Activated CD8-positive, alpha-beta memory T cell treated with anti-CD3 and anti-CD28 coated beads, Interleukin-2, amount 10 ng/mL, durations not matched to agents 7 days and 5 days (primary cell): ENCODE measurements at regions of chr3 and their contacts with region 1.

Region 1: DNA sequence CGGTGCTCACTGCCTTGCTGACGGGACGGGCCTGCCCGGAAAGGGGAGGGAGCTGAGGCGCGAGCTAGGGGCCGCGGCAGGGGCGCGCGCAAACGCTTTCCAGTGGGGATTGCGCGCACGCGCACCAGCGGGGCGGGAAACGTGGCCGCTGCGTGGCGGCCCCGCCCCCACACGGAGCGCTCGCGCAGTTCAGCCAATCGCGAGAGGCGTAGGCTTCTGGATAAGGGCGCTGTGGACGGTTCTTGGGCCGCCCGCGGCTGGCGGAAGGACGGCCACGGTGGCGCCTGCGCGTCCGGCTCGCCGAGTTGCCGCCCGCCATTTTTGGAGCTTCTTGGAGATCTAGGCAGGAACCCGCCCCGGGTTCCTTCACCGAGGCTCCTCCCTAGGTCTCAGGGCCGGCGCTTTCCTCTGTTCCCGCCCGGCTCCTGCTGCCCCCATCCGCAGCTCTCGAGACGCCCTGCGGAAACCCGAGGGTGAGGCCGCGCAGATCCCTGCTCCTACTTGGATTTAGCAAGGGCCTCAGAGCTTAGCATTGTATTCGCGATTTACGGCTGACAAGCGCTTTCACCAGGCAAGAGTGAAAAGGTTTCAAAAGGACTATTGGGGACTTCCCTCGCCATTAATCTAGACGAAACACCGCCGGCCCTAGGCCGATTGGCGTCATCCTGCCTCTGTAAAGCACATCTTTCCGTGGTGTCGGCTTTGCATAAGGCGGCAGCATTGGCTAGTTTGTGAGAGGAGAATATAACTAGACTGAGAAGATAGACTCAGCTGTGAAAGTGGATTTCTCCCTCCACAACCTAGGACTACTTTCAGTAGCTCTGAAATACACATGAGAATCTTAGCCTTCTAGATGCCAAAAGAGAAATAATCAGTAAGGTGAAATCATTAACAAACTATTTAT is 496 bp upstream of the STAG1 start:
- DNase-seq: peak; percentile 99
- ATAC-seq: peak; percentile 88
- H3K4me3 Mint-ChIP-seq: peak overlapping the region; percentile 80
- H3K27ac Mint-ChIP-seq: peak overlapping the region; percentile 95
- H3K4me1 Mint-ChIP-seq: peaks cover 35% of the 10 kb centered on the region
- H3K27me3 Mint-ChIP-seq: no peaks in the 10 kb centered on the region

Region 2: DNA sequence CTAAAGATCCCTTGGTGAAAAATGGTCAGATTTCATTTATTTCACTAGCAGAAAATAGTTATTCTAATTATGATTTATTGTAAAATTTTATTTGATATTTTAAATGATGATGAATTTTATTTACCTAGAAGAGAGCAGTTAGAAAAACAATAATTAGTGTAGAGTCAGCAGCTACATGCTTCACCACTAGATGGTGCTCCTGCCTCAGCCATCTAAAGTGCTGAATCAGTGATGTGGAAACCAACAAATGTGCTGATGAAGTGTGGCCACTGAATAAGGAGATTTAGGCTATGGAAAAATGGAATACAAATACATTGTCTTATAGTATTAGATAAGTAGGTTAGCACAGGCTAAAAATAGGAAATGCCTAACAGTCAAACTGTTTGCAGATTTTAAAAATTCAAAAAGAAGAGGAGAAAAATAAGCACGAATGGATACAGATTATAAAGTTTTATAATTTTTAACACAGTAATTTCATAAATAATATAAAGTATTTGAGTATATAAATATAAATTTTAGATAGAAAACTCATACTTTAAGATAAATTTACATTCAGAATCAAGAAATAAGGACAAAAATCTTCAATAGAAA is 677.4 kb before region 1 on chr3:
- CTCF ChIA-PET with region 1: interaction called, 47 read pairs
- DNase-seq: peak; percentile 81
- ATAC-seq: peak; percentile 74
- H3K4me3 Mint-ChIP-seq: no peak overlapping the region
- H3K27ac Mint-ChIP-seq: no peak overlapping the region
- H3K4me1 Mint-ChIP-seq: peaks cover 8% of the 10 kb centered on the region
- H3K27me3 Mint-ChIP-seq: peaks cover 7% of the 10 kb centered on the region

Region 3: DNA sequence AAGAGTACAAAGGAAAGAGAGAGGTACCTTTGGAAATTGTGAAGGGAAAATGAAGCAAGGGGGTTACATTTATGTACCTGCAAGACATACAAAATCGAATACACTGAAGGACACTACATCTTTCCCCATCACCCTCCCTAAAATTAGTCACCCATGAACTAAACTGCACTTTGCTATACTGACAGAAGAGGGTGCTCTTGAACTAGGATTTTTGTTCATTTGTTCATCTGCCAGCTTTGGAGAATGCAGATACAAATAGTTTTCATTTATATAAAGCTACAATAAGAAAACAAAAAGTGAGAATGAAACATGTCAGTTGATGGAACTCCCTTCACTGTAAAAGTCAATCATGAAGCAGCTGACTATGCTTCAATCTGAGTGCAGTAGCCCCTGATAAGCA is 446.8 kb before region 1 on chr3:
- CTCF ChIA-PET with region 1: interaction called, 17 read pairs
- DNase-seq: no peak
- ATAC-seq: peak; percentile 49
- H3K4me3 Mint-ChIP-seq: no peak overlapping the region
- H3K27ac Mint-ChIP-seq: no peak overlapping the region
- H3K4me1 Mint-ChIP-seq: peaks cover 2% of the 10 kb centered on the region
- H3K27me3 Mint-ChIP-seq: no peaks in the 10 kb centered on the region

Region 4: DNA sequence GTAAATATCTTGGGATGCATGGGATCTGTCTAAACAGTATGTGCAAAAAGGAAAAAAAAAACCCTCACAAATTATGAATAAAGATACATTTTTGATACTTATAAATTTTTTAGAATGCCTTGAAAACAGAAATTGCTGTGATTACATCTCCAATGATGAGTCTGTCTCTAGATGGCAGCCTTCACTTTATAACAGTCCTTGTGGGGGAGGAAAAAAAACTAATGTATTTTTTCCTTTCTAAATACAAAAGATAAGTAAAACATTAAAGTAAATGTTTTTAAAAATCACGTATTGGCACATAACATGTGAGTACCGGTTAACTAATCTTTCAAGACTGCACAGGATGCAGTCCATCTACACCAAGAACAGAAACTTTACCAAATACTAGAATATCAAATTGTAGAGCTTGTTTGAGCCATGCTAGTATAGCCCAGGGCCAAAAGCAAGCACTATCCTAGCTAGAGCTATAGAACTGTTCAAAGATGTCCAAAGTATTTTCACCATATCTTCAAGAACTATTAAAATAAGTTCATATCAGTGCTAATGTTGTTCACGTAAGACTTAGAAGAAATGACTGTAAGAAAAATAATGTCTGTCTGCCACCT is 206.9 kb before region 1 on chr3:
- CTCF ChIA-PET with region 1: interaction called, 12 read pairs
- DNase-seq: no peak
- ATAC-seq: no peak
- H3K4me3 Mint-ChIP-seq: no peak overlapping the region
- H3K27ac Mint-ChIP-seq: no peak overlapping the region
- H3K4me1 Mint-ChIP-seq: peaks cover 6% of the 10 kb centered on the region
- H3K27me3 Mint-ChIP-seq: no peaks in the 10 kb centered on the region

Region 5: GRCh38 chr3:136861890-136862616 is 109.4 kb after region 1 on chr3 and contains the start of gene NCK1:
- CTCF ChIA-PET with region 1: interaction called, 30 read pairs
- DNase-seq: peak; percentile 99
- ATAC-seq: peak; percentile 98
- H3K4me3 Mint-ChIP-seq: peak within 1 kb of the TSS; percentile 97
- H3K27ac Mint-ChIP-seq: peak within 1 kb of the TSS; percentile 90
- H3K4me1 Mint-ChIP-seq: peaks cover 45% of the 10 kb centered on the region
- H3K27me3 Mint-ChIP-seq: no peaks in the 10 kb centered on the region
- total RNA-seq, gene NCK1: 37.1 to 37.4 TPM

Region 6: GRCh38 chr3:136909187-136909586 is 156.5 kb after region 1 on chr3:
- CTCF ChIA-PET with region 1: no interaction called
- DNase-seq: no peak
- ATAC-seq: no peak
- H3K4me3 Mint-ChIP-seq: no peak overlapping the region
- H3K27ac Mint-ChIP-seq: peak overlapping the region; percentile 4
- H3K4me1 Mint-ChIP-seq: peaks cover 48% of the 10 kb centered on the region
- H3K27me3 Mint-ChIP-seq: no peaks in the 10 kb centered on the region

Region 7: GRCh38 chr3:136955813-136956212 is 203.1 kb after region 1 on chr3:
- CTCF ChIA-PET with region 1: no interaction called
- DNase-seq: no peak
- ATAC-seq: no peak
- H3K4me3 Mint-ChIP-seq: no peak overlapping the region
- H3K27ac Mint-ChIP-seq: no peak overlapping the region
- H3K4me1 Mint-ChIP-seq: peaks cover 14% of the 10 kb centered on the region
- H3K27me3 Mint-ChIP-seq: no peaks in the 10 kb centered on the region